ENCODE measurements at regions of chr22 and their contacts with region 1.

Region 1: DNA sequence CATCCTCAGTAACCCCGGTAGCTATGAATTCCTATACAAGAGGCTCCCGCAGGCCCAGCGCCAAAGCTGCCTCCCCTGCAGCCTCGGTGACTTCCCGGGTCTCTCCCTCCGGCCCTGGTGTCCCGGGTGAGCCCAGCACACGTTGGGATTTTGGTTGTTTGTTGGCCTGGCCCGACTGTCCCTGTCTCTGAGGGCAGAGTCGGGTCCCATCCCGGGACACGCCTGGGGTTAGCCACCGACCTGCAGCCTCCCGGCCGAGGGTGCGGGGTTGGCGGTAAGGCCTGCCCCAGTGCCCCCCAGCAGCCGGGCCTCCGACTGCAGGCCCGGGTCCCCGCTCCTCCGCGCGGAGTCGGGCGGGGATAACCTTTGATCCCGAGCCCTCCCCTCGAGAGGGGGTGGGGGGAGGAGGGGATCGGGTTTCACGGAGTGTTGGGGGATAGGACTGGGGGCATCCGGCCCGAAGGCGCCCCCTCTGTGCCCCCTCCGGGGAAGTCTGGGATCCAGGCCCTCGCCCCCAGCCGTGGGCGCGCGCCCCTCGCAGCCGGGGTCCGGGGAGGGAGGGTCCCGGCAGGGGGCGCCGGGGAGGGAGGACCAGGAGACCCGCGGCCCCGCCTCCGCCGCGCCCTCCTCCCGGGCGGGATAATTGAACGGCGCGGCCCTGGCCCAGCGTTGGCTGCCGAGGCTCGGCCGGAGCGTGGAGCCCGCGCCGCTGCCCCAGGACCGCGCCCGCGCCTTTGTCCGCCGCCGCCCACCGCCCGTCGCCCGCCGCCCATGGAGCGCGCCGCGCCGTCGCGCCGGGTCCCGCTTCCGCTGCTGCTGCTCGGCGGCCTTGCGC is at the start of gene FBLN1:
- DNase-seq: no peak
- H3K4me3 ChIP-seq: peak within 1 kb of the TSS; percentile 56 to 70
- H3K27ac ChIP-seq: peak within 1 kb of the TSS; percentile 66 to 72
- H3K4me1 ChIP-seq: peaks cover 0 to 22% of the 10 kb centered on the region in 2 donors
- H3K27me3 ChIP-seq: no peaks in the 10 kb centered on the region
- CTCF ChIP-seq: peak in 2 of 3 experiments; percentile 16 to 30
- total RNA-seq, gene FBLN1: 580 TPM

Region 2: GRCh38 chr22:45473691-45474491 is 28.5 kb before region 1 on chr22:
- intact Hi-C with region 1: no loop called
- DNase-seq: no peak
- H3K4me3 ChIP-seq: no peak overlapping the region
- H3K27ac ChIP-seq: peak overlapping the region; percentile 83 to 90
- H3K4me1 ChIP-seq: peaks cover 19 to 51% of the 10 kb centered on the region in 2 donors
- H3K27me3 ChIP-seq: no peaks in the 10 kb centered on the region
- CTCF ChIP-seq: no peak

Region 3: GRCh38 chr22:45483918-45484499 is 18.4 kb before region 1 on chr22:
- intact Hi-C with region 1: loop called (anchors 2 kb)
- DNase-seq: no peak
- H3K4me3 ChIP-seq: no peak overlapping the region
- H3K27ac ChIP-seq: peak overlapping the region in 1 of 2 donors; percentile 59
- H3K4me1 ChIP-seq: peaks cover 3 to 16% of the 10 kb centered on the region in 2 donors
- H3K27me3 ChIP-seq: no peaks in the 10 kb centered on the region
- CTCF ChIP-seq: no peak

Region 4: GRCh38 chr22:45544588-45545170 is 42.2 kb after region 1 on chr22:
- intact Hi-C with region 1: no loop called
- DNase-seq: peak in 1 of 2 donors; percentile 75
- H3K4me3 ChIP-seq: no peak overlapping the region
- H3K27ac ChIP-seq: peak overlapping the region; percentile 65 to 66
- H3K4me1 ChIP-seq: peaks cover 9 to 28% of the 10 kb centered on the region in 2 donors
- H3K27me3 ChIP-seq: no peaks in the 10 kb centered on the region
- CTCF ChIP-seq: no peak

Region 5: DNA sequence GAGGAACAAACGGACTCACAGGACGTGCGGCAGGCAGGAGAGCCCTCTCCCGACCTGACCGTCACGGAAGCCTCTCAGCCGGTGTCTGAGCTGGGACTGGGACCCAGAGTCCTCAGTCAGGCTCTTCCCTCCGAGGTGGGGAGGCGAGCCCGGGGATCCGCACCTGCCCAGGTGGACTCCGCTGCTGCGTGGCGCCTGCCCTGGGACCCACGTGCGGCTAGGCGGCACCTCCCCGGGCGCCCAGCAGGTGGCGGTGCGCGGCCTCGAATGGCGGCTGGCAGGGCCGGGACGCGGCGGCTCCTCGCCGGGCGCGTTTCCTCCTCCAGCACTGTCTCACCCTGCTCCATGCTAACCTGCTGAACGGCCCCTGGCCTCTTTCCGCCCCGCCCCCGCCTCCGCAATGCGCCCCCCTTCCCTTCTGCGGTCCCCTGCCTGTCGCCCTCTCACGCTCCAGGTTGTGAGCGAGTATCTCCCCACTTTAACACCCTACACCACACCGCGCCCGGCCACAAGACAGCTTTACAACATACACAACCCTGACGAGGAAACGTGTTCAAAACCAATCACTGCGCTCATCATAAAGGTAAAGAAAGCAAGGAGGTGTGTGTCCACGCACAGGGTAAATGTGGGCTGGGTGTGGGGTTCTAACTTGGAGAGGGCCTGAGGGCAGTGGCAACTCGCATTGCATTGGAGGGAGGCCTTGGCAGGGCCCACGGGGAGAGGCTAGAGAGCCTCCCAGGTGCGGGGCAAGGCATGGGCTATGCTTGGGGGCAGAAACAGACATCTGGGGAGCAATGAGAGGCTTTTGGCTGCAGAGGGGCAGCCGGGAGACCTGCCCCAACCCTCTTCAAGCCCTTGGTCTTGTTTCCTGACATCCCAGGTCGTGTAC is 143.3 kb after region 1 on chr22:
- intact Hi-C with region 1: no loop called
- DNase-seq: peak in 1 of 2 donors; percentile 77
- H3K4me3 ChIP-seq: no peak overlapping the region
- H3K27ac ChIP-seq: no peak overlapping the region
- H3K4me1 ChIP-seq: peaks cover 0 to 3% of the 10 kb centered on the region in 2 donors
- H3K27me3 ChIP-seq: no peaks in the 10 kb centered on the region
- CTCF ChIP-seq: peak; percentile 84 to 95 (median 95)